Transverse colon (tissue), 4 donors: ENCODE measurements at regions of chr22 and their contacts with region 1.

Region 1: GRCh38 chr22:37797874-37798500 is 9.7 kb upstream of the GCAT start:
- DNase-seq: no peak
- H3K4me3 ChIP-seq: no peak overlapping the region
- H3K27ac ChIP-seq: no peak overlapping the region
- H3K4me1 ChIP-seq: peaks cover 0 to 40% (median 25%) of the 10 kb centered on the region in 4 donors
- H3K27me3 ChIP-seq: no peaks in the 10 kb centered on the region
- CTCF ChIP-seq: no peak
- EP300 ChIP-seq: no peak
- POLR2A ChIP-seq: no peak

Region 2: DNA sequence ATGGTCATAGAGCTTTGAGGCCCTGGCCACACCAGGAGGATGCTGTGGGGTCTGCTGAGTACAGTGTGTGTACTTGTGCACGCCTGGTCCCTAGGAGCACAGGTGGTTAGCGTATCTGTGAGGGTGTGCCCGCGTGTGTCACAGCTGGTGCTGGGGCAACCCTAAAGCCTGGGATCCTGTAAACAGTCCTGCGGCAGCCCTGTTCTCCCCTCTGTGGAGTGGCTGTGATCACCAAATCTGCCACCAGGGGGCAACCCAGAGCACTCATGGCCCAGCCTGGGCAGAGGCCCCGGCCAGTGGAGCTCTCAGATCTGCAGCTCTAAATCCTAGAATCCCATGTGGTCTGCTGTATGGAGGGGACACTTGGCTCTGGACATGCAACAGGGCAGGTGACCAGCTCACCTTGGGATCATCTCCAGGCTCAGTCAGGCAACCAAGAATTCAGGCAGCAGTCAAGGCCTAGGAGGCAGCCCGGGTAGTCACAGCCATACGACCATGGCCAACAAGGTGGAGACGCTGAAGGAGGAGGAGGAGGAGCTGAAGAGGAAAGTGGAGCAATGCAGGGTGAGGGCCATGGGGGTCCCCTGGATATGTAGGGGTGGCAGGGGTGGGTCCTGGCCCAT is 154.7 kb before region 1 on chr22:
- in situ Hi-C with region 1: no loop called
- intact Hi-C with region 1: loop called (anchors 10 kb)
- DNase-seq: peak; percentile 93
- H3K4me3 ChIP-seq: no peak overlapping the region
- H3K27ac ChIP-seq: peak overlapping the region; percentile 89 to 93 (median 92)
- H3K4me1 ChIP-seq: peaks cover 25 to 52% (median 46%) of the 10 kb centered on the region in 4 donors
- H3K27me3 ChIP-seq: no peaks in the 10 kb centered on the region
- CTCF ChIP-seq: peak; percentile 92 to 98 (median 94)
- EP300 ChIP-seq: no peak
- POLR2A ChIP-seq: no peak

Region 3: DNA sequence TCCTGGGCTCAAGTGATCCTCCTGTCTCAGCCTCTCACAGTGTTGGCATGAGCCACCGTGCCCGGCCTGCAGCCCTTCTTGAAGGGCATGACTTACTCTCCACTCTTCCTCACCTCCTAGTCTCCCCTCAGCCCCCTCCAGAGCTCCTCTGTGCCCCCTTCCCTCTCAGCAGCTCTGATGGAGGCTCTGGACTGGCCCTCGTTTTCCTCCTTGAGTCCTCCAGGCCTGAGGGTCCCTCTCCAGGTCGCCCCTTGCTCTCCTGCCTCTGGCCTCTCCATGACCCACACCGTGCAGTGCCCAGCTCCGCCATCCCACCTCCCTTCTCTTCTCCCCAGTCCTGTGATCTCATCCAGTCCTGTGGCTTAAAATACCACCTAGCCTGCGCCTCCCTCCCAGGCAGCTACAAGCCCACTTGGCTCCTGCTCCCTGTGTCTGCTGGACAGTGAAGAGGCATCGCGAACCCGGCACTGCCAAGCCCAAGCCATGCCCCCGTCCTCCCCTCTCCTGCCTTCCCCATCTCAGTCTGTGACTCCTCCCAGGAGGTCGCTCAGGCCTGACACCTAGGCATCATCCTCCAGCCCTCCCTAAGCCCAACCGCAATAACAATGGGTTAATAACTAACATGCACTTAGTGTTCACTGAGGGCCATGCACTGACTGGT is 645.1 kb after region 1 on chr22:
- in situ Hi-C with region 1: no loop called
- intact Hi-C with region 1: no loop called
- DNase-seq: no peak
- H3K4me3 ChIP-seq: no peak overlapping the region
- H3K27ac ChIP-seq: no peak overlapping the region
- H3K4me1 ChIP-seq: no peaks in the 10 kb centered on the region
- H3K27me3 ChIP-seq: peaks cover 70% of the 10 kb centered on the region
- CTCF ChIP-seq: no peak
- EP300 ChIP-seq: no peak
- POLR2A ChIP-seq: no peak